ENCODE measurements at regions of chr11 and their contacts with region 1.

Region 1: DNA sequence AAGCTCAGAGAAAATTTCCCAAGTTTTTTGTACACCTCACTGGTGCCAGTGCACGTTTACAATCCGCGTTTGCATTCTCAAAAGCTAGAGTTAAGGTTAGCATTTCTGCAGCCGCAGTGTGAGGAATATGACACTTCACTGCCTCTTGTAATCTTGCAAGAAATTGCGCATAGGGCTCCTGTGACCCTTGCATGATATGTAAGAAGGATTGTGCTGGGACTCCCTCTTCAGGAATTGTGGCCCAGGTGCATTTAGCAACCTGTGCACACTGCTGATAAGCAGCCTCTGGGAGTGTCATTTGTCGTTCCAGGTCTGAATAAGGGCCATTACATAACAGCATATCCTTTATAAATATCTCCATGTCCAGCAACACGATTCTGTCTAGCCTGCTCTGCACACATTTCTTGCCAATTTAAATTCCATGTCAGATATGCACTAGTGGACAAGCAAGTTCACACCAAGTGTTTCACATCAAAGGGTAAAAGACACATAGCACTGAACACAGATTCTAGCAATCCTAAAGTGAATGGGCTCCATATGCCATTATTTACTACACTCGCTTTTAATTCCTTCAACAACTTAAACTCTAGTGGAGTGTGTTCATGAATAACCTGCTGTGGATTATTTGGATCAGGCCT is 69.2 kb upstream of the INCENP start:
- DNase-seq: peak; percentile 83 to 85
- H3K4me3 ChIP-seq: no peak overlapping the region
- H3K4me3 Mint-ChIP-seq: peak overlapping the region; percentile 25
- H3K27ac Mint-ChIP-seq: peak overlapping the region; percentile 81
- H3K4me1 ChIP-seq: 0 out of 2 replicates have a peak, but pooled peaks cover 5% of the 10 kb centered on the region
- H3K4me1 Mint-ChIP-seq: no peaks in the 10 kb centered on the region
- H3K27me3 ChIP-seq: no peaks in the 10 kb centered on the region; the same call in 1 of the 2 replicates
- H3K27me3 Mint-ChIP-seq: no peaks in the 10 kb centered on the region
- CTCF ChIP-seq: peak; percentile 78 to 93

Region 2: GRCh38 chr11:61954851-61955421 is 99.7 kb before region 1 on chr11:
- CTCF ChIA-PET with region 1: interaction called, 7 read pairs
- POLR2A ChIA-PET with region 1: no interaction called
- intact Hi-C with region 1: loop called (anchors 1 kb)
- DNase-seq: peak; percentile 67 to 79
- H3K4me3 ChIP-seq: peak overlapping the region; percentile 43
- H3K4me3 Mint-ChIP-seq: peak overlapping the region; percentile 71
- H3K27ac Mint-ChIP-seq: peak overlapping the region; percentile 66
- H3K4me1 ChIP-seq: peaks cover 11% of the 10 kb centered on the region
- H3K4me1 Mint-ChIP-seq: no peaks in the 10 kb centered on the region
- H3K27me3 ChIP-seq: no peaks in the 10 kb centered on the region
- H3K27me3 Mint-ChIP-seq: no peaks in the 10 kb centered on the region
- CTCF ChIP-seq: peak in 1 of 2 experiments; percentile 37